ENCODE measurements at regions of chr18 and their contacts with region 1.

Region 1: GRCh38 chr18:38948436-38948835 is 1382.8 kb upstream of the CELF4 start:
- DNase-seq: no peak
- ATAC-seq: no peak
- H3K4me3 Mint-ChIP-seq: no peak overlapping the region
- H3K27ac Mint-ChIP-seq: no peak overlapping the region
- H3K4me1 Mint-ChIP-seq: peaks cover 4% of the 10 kb centered on the region
- H3K27me3 Mint-ChIP-seq: no peaks in the 10 kb centered on the region

Region 2: DNA sequence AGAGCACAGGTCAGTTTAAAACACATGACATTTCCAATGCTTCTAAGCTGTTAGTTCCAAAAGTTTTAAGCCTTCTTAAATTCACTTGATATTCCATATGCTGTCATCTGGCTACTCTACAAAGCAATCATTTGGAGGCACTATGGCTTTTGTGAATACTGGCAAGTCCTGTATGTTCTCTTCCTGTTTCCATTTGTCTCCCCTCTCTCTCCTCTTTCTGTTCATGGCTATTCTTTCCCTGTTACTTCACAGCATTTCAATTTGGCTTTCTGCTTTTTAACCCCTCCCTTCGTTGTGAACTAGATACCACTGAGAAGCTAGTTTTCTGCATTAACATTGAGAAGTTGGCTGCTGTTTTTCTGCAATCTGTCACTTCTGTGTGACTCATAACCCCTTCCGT is 45.6 kb before region 1 on chr18:
- CTCF ChIA-PET with region 1: no interaction called
- POLR2A ChIA-PET with region 1: no interaction called
- intact Hi-C with region 1: no loop called
- DNase-seq: no peak
- ATAC-seq: no peak
- H3K4me3 Mint-ChIP-seq: no peak overlapping the region
- H3K27ac Mint-ChIP-seq: no peak overlapping the region
- H3K4me1 Mint-ChIP-seq: no peaks in the 10 kb centered on the region
- H3K27me3 Mint-ChIP-seq: peaks cover 1% of the 10 kb centered on the region

Region 3: GRCh38 chr18:39380866-39381265 is 432.4 kb after region 1 on chr18:
- CTCF ChIA-PET with region 1: no interaction called
- POLR2A ChIA-PET with region 1: interaction called, 10 read pairs
- intact Hi-C with region 1: no loop called
- DNase-seq: no peak
- ATAC-seq: no peak
- H3K4me3 Mint-ChIP-seq: no peak overlapping the region
- H3K27ac Mint-ChIP-seq: no peak overlapping the region
- H3K4me1 Mint-ChIP-seq: no peaks in the 10 kb centered on the region
- H3K27me3 Mint-ChIP-seq: no peaks in the 10 kb centered on the region

Measured in activated CD4-positive, alpha-beta T cell treated with anti-CD3 and anti-CD28 coated beads for 36 hours (primary cell).